ENCODE measurements at regions of chr11 and their contacts with region 1.

Region 1: DNA sequence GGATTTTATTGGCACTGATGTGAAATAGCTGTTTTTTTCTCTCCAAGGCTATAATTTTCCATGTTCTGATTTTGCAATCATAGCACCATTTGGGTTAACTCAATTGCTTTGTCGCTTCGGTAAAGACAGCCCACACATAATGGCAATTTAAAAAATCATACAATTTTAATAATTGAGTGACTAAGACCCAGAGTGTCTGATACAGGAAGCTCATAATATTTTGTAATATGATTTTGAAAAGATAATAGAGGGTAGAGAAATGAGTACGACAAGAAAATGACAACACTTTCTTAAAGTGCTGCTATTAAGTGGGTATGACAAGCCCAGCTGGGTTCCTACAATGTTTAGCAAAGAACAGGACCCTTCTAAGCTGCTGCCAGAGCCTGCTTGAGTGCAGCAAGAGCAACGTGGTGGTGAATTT is 439.1 kb downstream of the METTL15 start:
- DNase-seq: peak; percentile 80
- H3K4me3 ChIP-seq: no peak overlapping the region
- H3K27ac ChIP-seq: no peak overlapping the region
- H3K4me1 ChIP-seq: peaks cover 5% of the 10 kb centered on the region
- H3K27me3 ChIP-seq: peaks cover 49% of the 10 kb centered on the region
- CTCF ChIP-seq: no peak

Region 2: GRCh38 chr11:28476049-28476448 is 71.3 kb before region 1 on chr11:
- CTCF ChIA-PET with region 1: no interaction called
- POLR2A ChIA-PET with region 1: no interaction called
- intact Hi-C with region 1: no loop called
- DNase-seq: peak; percentile 93
- H3K4me3 ChIP-seq: no peak overlapping the region
- H3K27ac ChIP-seq: no peak overlapping the region
- H3K4me1 ChIP-seq: peaks cover 9% of the 10 kb centered on the region
- H3K27me3 ChIP-seq: peaks cover 76% of the 10 kb centered on the region
- CTCF ChIP-seq: no peak

Region 3: DNA sequence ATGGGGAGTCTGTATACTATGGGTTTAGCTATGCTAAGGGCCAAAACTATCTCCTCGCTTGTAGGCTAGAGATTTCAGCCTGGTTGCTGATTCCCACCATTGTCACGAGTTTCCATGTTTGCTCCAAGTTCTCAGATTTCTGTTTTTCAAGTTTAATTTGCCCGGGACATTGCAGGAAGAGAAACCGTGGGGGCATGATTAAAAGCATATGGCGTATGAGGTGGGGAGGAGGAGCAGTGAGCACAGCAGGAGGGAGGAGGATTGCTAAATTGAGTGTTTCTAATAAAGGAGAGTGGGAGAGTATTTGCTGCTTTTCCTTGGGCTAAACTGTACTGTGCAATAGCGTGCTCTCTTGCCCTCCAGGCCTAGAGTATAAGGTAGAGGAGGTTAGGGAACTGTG is 119.3 kb after region 1 on chr11:
- CTCF ChIA-PET with region 1: no interaction called
- POLR2A ChIA-PET with region 1: no interaction called
- intact Hi-C with region 1: no loop called
- DNase-seq: peak; percentile 97
- H3K4me3 ChIP-seq: no peak overlapping the region
- H3K27ac ChIP-seq: peak overlapping the region; percentile 15
- H3K4me1 ChIP-seq: peaks cover 13% of the 10 kb centered on the region
- H3K27me3 ChIP-seq: no peaks in the 10 kb centered on the region
- CTCF ChIP-seq: no peak

Region 4: DNA sequence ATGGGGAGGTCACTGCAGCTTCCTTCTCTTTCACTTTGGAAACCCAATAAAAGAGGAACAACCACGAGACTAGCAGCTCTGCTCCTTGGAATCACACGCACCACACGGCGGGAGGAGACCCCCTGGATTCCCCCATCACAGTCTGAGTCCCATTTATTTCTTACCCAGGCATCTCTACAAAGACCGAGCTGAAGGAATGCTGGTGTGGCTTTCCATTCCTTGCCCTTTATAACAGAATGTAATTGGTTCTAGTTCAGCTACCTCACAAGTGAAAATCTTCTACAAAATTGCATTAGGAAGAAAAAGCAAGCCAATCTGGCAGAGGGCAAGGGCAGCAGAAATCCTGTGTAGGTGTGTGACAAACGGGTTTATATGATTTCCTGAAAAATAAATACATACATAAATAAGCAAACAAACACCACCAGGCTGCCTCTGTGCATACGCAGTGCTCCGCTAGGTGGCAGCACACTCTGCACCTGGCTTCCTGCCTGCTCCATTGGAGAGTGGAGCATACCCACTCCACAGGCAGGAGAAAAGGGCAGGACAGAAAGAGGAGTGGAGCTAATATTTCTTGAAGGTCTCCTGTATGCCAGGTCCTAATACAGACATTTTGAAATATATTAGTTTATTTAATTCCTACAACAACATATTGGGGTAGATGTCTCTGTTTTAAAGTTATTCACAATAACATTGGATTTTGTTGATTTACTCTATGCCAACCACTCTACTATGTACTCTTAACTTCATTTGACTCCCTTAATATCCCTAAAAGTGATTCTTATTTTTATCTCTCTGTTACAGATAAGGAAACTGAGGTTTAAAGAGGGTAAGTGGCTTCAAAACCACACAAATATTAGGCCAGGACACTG is 796.4 kb after region 1 on chr11:
- CTCF ChIA-PET with region 1: no interaction called
- POLR2A ChIA-PET with region 1: no interaction called
- intact Hi-C with region 1: loop called (anchors 5 kb)
- DNase-seq: peak; percentile 89
- H3K4me3 ChIP-seq: peak overlapping the region; percentile 16
- H3K27ac ChIP-seq: no peak overlapping the region
- H3K4me1 ChIP-seq: no peaks in the 10 kb centered on the region
- H3K27me3 ChIP-seq: peaks cover 54% of the 10 kb centered on the region
- CTCF ChIP-seq: peak; percentile 100

Measured in A673 (cell line).